Common myeloid progenitor, CD34-positive (primary cell): ENCODE measurements at regions of chr2 and their contacts with region 1.

Region 1: DNA sequence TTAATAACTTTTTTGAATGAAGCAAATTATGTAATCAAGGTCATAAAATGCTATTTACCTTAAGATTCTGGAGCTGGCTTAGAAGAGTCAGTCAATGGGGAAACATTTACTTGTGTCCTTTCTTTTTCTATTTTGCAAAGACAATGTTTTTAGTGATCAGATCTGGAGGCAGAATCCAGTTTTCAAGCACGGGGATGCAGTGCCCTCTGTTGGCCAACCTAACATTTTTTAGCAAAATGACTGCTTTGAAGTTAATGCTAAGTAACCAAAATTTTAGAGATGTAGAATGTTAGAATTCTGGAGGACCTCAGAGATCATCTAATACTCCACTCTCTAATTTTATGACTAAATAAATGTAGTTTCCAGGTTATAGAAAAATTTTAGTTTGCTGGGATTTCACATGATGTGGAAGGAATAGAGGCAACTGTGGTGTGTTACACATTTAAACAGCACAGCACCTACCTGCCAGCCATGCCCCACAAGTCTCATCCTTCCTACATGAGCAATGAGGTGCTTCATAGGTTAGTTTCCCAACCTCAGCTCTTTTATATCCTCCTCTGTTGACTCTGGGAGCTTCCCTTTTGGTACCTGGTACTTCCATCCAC is 23.6 kb upstream of the SLC9A4 start:
- DNase-seq: peak; percentile 48 to 79 (median 69)
- H3K4me3 ChIP-seq: no peak overlapping the region
- H3K27ac ChIP-seq: no peak overlapping the region
- H3K4me1 ChIP-seq: peaks cover 0 to 10% (median 3%) of the 10 kb centered on the region in 4 experiments
- H3K27me3 ChIP-seq: no peaks in the 10 kb centered on the region

Region 2: DNA sequence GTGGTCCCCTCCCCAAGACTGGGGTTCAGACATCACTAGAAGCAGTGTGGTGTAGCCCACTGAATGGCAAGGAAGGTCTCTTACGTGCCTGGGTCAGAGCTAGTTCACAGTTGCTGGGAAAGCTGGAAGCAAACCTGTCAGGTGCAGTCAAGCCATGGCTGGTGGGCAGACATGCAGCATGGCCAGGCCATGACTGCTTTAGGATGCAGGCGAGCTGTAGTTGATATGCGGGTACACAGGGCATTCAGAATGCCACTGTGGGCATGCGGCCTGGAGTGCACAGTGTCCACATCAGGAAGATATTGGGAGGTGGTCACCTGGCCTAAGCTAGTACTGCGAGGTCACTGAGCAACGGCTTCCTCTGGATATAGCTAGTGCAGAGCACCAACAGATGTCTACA is 11.7 kb after region 1 on chr2:
- CTCF ChIA-PET with region 1: interaction called, 12 read pairs
- POLR2A ChIA-PET with region 1: no interaction called
- DNase-seq: no peak
- H3K4me3 ChIP-seq: no peak overlapping the region
- H3K27ac ChIP-seq: no peak overlapping the region
- H3K4me1 ChIP-seq: no peaks in the 10 kb centered on the region
- H3K27me3 ChIP-seq: peaks cover 0 to 2% (median 0%) of the 10 kb centered on the region in 5 experiments

Region 3: GRCh38 chr2:102467514-102467913 is 18.0 kb after region 1 on chr2:
- CTCF ChIA-PET with region 1: interaction called, 12 read pairs
- POLR2A ChIA-PET with region 1: no interaction called
- DNase-seq: no peak
- H3K4me3 ChIP-seq: no peak overlapping the region
- H3K27ac ChIP-seq: no peak overlapping the region
- H3K4me1 ChIP-seq: no peaks in the 10 kb centered on the region
- H3K27me3 ChIP-seq: peaks cover 0 to 5% (median 0%) of the 10 kb centered on the region in 5 experiments